CD14-positive monocyte (primary cell): ENCODE measurements at regions of chr9 and their contacts with region 1.

Region 1: GRCh38 chr9:86925686-86926085 is 21.6 kb downstream of the GAS1 start:
- DNase-seq: no peak
- H3K4me3 ChIP-seq: no peak overlapping the region
- H3K4me3 Mint-ChIP-seq: no peak overlapping the region
- H3K27ac ChIP-seq: no peak overlapping the region
- H3K27ac Mint-ChIP-seq: peak overlapping the region in 1 of 7 donors; percentile 45
- H3K4me1 ChIP-seq: no peaks in the 10 kb centered on the region
- H3K4me1 Mint-ChIP-seq: no peaks in the 10 kb centered on the region
- H3K27me3 ChIP-seq: no peaks in the 10 kb centered on the region
- H3K27me3 Mint-ChIP-seq: peaks cover 2 to 10% (median 6%) of the 10 kb centered on the region in 3 donors
- CTCF ChIP-seq: no peak

Region 2: DNA sequence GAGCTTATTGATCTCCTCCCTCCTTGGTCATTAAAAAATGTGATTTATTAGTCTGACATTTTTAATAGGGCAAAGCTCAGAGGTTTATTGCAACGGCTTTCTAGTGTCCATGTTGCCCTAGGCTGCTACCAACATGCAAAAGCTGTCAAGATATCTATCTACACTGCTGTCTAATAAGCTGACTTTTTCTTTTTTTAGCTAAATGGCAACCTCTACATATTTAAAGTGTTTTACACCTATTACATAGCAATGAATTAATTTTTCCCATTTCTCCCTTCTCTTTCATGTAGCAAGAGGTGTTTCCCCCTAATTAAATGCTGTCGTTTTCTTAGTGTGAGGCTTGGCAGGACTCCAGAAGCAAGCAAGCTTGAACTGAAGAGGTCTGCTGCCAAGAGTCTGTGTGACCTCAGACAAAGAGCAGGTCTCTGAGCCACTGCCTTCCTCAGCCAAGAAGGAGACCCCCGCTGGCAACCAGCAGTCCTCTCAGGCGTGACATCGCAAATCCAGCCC is 57.8 kb before region 1 on chr9:
- intact Hi-C with region 1: no loop called
- DNase-seq: no peak
- H3K4me3 ChIP-seq: no peak overlapping the region
- H3K4me3 Mint-ChIP-seq: no peak overlapping the region
- H3K27ac ChIP-seq: no peak overlapping the region
- H3K27ac Mint-ChIP-seq: no peak overlapping the region
- H3K4me1 ChIP-seq: no peaks in the 10 kb centered on the region
- H3K4me1 Mint-ChIP-seq: no peaks in the 10 kb centered on the region
- H3K27me3 ChIP-seq: no peaks in the 10 kb centered on the region
- H3K27me3 Mint-ChIP-seq: peaks cover 0 to 3% (median 0%) of the 10 kb centered on the region in 3 donors
- CTCF ChIP-seq: no peak

Region 3: DNA sequence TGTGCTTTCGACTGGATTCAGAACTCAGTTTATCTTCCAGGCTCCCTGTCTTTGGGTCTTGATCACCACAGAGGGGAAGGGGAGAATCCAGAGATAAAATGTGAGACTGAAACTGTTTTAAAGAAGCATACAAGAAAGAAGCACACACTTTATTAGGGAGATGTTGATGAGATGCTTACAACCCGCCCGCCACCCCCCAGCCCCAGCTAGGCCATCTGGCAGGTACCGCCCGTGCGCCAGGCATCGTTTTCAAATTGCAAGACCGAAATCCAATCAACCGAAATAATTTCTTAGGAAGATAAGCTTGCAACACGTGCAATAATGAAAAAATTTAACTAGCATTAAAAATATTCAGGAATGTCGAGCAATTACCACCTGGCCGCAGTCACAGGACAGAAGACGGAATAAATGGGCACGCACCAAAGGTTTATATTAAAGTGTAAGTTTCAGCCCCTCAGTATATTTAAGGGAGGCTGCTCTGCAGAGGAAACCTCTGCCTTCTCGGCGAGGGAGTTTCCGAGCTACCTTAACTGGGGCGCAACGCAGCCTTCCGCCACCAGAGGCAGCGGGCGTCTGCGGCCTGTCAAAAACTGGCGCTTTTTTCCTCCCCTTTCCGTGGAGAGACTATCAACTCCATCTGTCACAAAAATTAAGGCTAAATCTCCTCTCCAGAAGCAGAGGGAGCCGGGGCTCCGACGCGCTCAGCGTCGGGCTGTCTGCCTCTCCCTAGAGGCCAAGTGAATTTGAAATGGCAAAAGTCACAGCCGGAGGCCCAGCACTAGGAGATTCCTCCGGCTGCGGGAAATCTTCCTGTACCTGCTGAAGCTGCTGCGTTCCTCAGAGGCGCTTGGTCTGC is 22.6 kb after region 1 on chr9:
- intact Hi-C with region 1: loop called in 1 of 2 experiments (anchors 1 kb)
- DNase-seq: peak; percentile 27 to 54 (median 45)
- H3K4me3 ChIP-seq: peak overlapping the region; percentile 47 to 86 (median 80)
- H3K4me3 Mint-ChIP-seq: peak overlapping the region; percentile 84 to 93
- H3K27ac ChIP-seq: no peak overlapping the region
- H3K27ac Mint-ChIP-seq: no peak overlapping the region
- H3K4me1 ChIP-seq: peaks cover 22 to 34% of the 10 kb centered on the region in 2 donors
- H3K4me1 Mint-ChIP-seq: peaks cover 22% of the 10 kb centered on the region
- H3K27me3 ChIP-seq: peaks cover 30% of the 10 kb centered on the region in 2 donors
- H3K27me3 Mint-ChIP-seq: peaks cover 33 to 42% (median 33%) of the 10 kb centered on the region in 3 donors
- CTCF ChIP-seq: peak; percentile 88